Esophagus muscularis mucosa (tissue), 4 donors: ENCODE measurements at regions of chr17 and their contacts with region 1.

Region 1: GRCh38 chr17:40041196-40041595 is 13.0 kb downstream of the MED24 start:
- DNase-seq: no peak
- H3K4me3 ChIP-seq: no peak overlapping the region
- H3K27ac ChIP-seq: no peak overlapping the region
- H3K4me1 ChIP-seq: peaks cover 14 to 25% (median 21%) of the 10 kb centered on the region in 4 donors
- H3K27me3 ChIP-seq: no peaks in the 10 kb centered on the region
- CTCF ChIP-seq: no peak
- EP300 ChIP-seq: no peak
- POLR2A ChIP-seq: no peak

Region 2: DNA sequence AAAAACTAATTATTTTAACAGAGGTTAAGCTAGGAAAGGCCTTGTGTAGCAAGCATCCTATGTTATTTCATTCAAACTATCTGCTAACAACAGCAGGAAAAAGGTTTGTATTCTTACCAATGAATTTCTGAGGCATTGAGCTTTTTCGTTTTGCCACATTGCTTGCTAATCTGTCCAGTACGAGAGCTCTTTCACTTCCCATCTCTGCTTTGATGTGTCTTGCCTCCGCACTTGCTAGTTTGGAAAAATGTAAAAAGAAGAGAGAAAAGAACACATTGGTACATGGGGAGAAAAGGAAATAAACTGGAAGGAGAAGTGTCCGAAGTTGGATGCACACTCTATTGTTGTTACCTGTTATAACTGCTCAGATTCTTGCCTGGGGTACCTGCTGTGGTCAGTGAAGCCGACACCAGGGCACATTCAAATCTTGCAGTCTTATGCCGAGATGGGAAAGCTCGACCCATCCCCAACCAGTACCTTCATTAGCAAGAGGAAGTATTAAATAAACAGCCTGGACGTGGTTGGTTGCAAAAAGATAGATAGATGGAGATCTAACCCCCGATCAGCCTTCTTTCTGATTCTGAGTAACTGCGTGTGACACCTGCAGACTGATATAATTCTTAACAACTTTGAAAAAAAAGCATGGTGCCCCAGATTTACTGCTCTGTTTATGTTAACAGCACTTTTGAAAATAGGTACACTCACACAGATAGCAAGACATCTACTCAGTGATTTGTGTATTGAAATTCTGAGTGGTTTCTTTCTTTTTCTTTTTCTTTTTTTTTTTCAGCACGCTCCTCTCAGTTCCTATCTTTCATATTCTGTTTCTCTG is 263.4 kb before region 1 on chr17:
- intact Hi-C with region 1: no loop called
- DNase-seq: no peak
- H3K4me3 ChIP-seq: peak overlapping the region in 1 of 4 donors; percentile 4
- H3K27ac ChIP-seq: no peak overlapping the region
- H3K4me1 ChIP-seq: no peaks in the 10 kb centered on the region
- H3K27me3 ChIP-seq: peaks cover 0 to 66% (median 0%) of the 10 kb centered on the region in 4 donors
- CTCF ChIP-seq: no peak
- EP300 ChIP-seq: no peak
- POLR2A ChIP-seq: no peak

Region 3: DNA sequence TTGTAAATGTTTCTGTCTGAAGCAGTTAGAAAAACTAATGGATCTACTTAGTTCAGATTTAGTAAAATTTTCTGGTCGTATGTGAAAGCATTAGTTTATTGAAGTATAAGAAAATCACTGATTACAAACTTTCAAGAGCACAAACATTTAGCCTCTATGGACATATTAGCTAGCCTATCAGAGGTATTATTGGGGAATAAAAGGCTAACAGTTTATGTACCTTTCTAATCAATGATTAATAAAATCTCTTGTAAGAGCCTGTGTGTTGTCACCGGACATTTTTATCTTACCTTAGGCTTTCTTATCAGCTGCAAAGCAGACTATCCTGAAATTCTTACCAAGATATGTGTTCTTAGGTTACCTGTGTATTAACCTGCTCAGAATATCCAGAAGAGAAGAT is 152.0 kb before region 1 on chr17:
- intact Hi-C with region 1: no loop called
- DNase-seq: no peak
- H3K4me3 ChIP-seq: no peak overlapping the region
- H3K27ac ChIP-seq: no peak overlapping the region
- H3K4me1 ChIP-seq: no peaks in the 10 kb centered on the region
- H3K27me3 ChIP-seq: peaks cover 0 to 65% (median 3%) of the 10 kb centered on the region in 4 donors
- CTCF ChIP-seq: no peak
- EP300 ChIP-seq: no peak
- POLR2A ChIP-seq: no peak

Region 4: DNA sequence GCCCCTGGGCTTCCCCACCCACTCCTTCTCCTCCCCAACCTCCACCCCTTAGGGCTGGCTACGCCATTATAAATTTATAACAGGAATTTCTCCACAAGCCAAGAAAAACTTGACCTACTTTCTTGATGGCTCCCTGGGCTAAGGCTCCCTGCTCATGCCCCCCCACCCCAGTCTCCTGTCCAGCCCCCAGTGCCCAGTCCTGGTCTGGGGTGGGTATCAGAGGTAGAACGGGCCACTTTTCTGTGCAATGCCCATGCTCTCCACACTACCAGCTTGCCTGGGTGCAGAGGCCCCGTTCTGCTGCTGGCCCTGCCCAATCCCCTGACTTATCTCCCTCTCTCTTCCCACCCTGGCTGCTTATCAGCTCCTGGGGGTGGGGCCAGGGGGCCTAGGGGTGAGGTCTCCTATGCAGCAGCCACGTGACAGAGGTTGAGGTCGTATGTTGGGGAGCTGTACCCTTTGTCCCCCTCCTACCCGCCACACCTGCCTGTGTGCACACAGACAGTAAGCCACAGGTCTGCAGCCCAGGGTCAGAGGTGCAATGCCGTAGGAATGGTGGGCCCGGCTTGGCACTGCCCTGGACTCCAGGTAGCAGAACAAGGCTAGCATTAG is 31.6 kb after region 1 on chr17:
- intact Hi-C with region 1: no loop called
- DNase-seq: no peak
- H3K4me3 ChIP-seq: peak overlapping the region; percentile 32 to 50 (median 46)
- H3K27ac ChIP-seq: peak overlapping the region; percentile 91 to 99 (median 99)
- H3K4me1 ChIP-seq: peaks cover 91 to 100% (median 99%) of the 10 kb centered on the region in 4 donors
- H3K27me3 ChIP-seq: no peaks in the 10 kb centered on the region
- CTCF ChIP-seq: peak in 1 of 3 experiments; percentile 2
- EP300 ChIP-seq: no peak
- POLR2A ChIP-seq: no peak

Region 5: DNA sequence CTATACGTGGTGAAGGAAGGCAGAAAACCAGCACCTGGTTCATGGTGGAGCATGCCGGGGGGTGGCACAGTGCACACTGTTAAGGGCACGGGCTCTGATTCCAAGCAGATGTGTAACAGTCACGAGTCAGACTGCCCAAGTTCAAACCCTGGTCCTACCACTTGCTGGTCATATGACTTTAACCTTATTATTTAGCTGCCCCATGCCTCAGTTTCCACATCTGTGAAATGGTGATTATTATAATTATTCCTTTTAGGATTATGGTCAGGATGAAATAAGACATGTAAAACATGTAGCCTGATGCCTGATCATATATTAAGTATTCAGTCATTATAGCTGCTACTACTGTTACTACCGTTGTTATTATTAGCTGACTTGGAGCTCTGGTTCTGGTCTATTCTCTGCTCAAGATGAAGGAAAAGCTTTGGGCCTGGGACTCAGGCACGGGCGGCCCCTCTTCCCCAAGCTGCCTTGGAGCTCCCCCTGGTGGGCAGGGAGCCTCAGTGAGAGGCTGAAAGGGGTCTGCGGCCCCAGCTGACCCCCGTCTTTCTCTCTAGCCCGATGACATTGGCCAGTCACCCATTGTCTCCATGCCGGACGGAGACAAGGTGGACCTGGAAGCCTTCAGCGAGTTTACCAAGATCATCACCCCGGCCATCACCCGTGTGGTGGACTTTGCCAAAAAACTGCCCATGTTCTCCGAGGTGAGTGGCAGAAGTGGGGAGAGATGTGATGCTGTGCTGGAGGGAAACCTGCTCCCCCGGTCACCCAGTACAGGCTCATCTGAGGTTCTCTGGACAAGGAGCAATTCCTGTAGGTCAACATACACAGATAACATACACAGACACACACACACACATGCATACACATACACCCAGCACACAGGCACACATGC is 45.2 kb after region 1 on chr17:
- intact Hi-C with region 1: loop called (anchors 5 kb)
- DNase-seq: no peak
- H3K4me3 ChIP-seq: no peak overlapping the region
- H3K27ac ChIP-seq: peak overlapping the region; percentile 44 to 63 (median 50)
- H3K4me1 ChIP-seq: peaks cover 23 to 52% (median 43%) of the 10 kb centered on the region in 4 donors
- H3K27me3 ChIP-seq: no peaks in the 10 kb centered on the region
- CTCF ChIP-seq: peak; percentile 86 to 95 (median 93)
- EP300 ChIP-seq: no peak
- POLR2A ChIP-seq: no peak